A549 (cell line): ENCODE measurements at regions of chr21 and their contacts with region 1.

Region 1: GRCh38 chr21:37267269-37268184 is at the start of gene VPS26C:
- DNase-seq: peak; percentile 58 to 98
- ATAC-seq: peak; percentile 95
- H3K4me3 ChIP-seq: peak within 1 kb of the TSS; percentile 69
- H3K27ac ChIP-seq: peak within 1 kb of the TSS; percentile 91 to 96
- H3K4me1 ChIP-seq: peaks cover 8% of the 10 kb centered on the region; the same call in 1 of the 3 replicates
- CTCF ChIP-seq: no peak
- EP300 ChIP-seq: no peak
- POLR2A ChIP-seq: peak; percentile 45; the same call in 1 of the 2 replicates
- RAD21 ChIP-seq: no peak; a peak in 1 of 5 replicates
- polyA plus RNA-seq, gene VPS26C: 29.5 and 32.0 TPM in 2 replicates

Region 2: DNA sequence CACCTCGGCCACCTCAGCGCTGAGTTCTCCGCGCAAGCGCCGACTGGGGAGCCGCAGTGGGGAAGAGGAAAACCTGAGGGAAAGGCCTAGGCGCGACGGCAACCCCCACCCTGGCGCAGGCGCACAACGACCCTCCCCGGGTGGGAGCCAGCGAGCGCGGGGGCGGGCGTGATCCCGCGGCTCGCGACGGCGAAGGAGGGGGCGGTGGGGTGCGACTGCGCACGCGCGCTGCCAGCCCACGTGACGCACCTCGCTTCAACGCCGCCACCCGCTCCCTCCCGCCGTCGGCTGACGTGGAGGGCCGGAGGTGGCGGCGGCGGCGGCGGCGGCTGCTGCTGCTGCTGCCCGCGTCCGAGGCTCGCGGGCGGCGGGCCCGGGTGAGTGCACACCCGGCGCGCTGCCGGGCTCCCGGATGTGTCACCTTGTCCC is 194.5 kb before region 1 on chr21 and contains the starts of genes PIGP and TTC3:
- CTCF ChIA-PET with region 1: no interaction called
- POLR2A ChIA-PET with region 1: no interaction called
- DNase-seq: peak; percentile 67 to 95
- ATAC-seq: peak; percentile 86 to 88
- H3K4me3 ChIP-seq: peak within 1 kb of the TSS; percentile 79
- H3K27ac ChIP-seq: peak within 1 kb of the TSS; percentile 95 to 99
- H3K4me1 ChIP-seq: peaks cover 8% of the 10 kb centered on the region; the same call in 2 of the 3 replicates
- CTCF ChIP-seq: no peak
- EP300 ChIP-seq: no peak
- POLR2A ChIP-seq: peak; percentile 51
- RAD21 ChIP-seq: no peak
- polyA plus RNA-seq, gene PIGP: 44.0 and 49.5 TPM in 2 replicates
- polyA plus RNA-seq, gene TTC3: 56.1 and 62.2 TPM in 2 replicates

Region 3: GRCh38 chr21:37338671-37339551 is 71.4 kb after region 1 on chr21:
- CTCF ChIA-PET with region 1: no interaction called
- POLR2A ChIA-PET with region 1: interaction called, 13 read pairs
- DNase-seq: peak; percentile 81 to 93
- ATAC-seq: peak; percentile 100
- H3K4me3 ChIP-seq: peak overlapping the region; percentile 17; the same call in 2 of the 3 replicates
- H3K27ac ChIP-seq: peak overlapping the region; percentile 70 to 81
- H3K4me1 ChIP-seq: peaks cover 16% of the 10 kb centered on the region
- CTCF ChIP-seq: no peak
- EP300 ChIP-seq: no peak; a peak in 2 of 5 replicates
- POLR2A ChIP-seq: no peak
- RAD21 ChIP-seq: peak in 1 of 2 experiments; percentile 1; a peak in 1 of 5 replicates